ENCODE measurements at regions of chr2 and their contacts with region 1.

Region 1: DNA sequence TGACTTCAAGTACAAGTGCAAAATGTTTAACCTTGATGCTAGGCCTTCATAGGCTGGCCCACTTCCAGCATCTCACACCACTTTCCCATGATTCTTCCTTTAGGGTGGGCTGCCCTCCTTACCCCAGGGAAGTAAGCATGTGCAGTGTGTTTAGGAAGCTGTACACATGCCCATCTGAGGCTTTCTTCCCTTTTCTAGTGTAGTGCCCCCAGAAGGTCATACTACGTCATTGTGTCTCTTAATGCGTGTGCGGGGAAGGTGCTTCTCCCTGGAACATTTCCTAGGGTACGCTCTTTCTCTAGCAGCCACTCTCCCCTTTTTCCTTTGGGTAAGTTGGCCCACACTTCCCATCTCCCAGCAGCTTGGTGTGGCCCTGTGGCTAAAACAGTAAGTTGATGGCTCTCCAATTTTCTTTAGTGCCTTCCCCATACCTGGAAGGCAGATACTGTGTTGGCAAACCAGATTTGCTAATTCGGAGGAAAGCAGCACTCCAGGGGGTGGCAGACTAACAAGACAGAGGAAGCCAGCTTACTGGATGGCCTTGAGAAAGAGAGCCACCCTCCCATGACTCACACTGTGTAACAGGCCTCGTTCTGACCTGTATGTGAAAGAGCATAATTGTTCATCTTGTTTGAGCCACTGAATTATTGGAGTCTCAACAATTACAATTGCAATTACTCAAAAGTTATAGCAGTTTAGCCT is 1.1 kb upstream of the SULT6B1 start:
- DNase-seq: peak; percentile 24
- H3K4me3 Mint-ChIP-seq: no peak overlapping the region
- H3K27ac Mint-ChIP-seq: no peak overlapping the region
- H3K4me1 Mint-ChIP-seq: peaks cover 2% of the 10 kb centered on the region
- H3K27me3 Mint-ChIP-seq: peaks cover 6% of the 10 kb centered on the region

Region 2: GRCh38 chr2:36973320-36973719 is 216.3 kb before region 1 on chr2:
- CTCF ChIA-PET with region 1: no interaction called
- POLR2A ChIA-PET with region 1: no interaction called
- intact Hi-C with region 1: no loop called
- DNase-seq: no peak
- H3K4me3 Mint-ChIP-seq: no peak overlapping the region
- H3K27ac Mint-ChIP-seq: no peak overlapping the region
- H3K4me1 Mint-ChIP-seq: peaks cover 1% of the 10 kb centered on the region
- H3K27me3 Mint-ChIP-seq: no peaks in the 10 kb centered on the region

Region 3: DNA sequence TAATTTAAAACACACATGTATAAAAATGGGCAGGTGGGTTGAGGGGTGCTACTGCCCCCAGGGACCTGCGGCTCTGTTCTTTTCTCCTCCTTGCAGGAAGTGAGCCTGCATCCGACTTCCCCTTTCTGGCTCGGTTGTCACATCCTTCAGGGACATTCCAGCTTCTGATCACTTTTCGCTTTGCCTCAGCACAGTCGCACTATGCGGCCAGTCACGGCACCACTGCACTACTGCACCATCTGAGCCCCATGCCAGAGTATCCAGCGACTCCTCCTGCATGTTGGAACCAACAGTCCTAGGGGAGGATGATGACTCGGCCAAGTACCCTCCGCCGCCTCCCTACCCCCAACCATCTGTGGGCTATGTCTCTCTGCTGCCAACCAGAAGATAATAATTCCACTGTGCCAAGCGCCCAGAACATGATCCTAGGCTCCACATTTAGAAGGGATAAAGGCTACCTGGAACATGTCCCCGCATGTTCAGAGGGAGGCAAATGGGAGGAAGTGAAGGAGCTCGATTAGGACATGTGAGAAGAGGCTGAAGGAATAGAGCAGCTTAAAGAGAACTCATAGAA is 464.3 kb after region 1 on chr2:
- CTCF ChIA-PET with region 1: no interaction called
- POLR2A ChIA-PET with region 1: no interaction called
- intact Hi-C with region 1: loop called (anchors 5 kb)
- DNase-seq: peak; percentile 63
- H3K4me3 Mint-ChIP-seq: peak overlapping the region; percentile 28
- H3K27ac Mint-ChIP-seq: peak overlapping the region; percentile 83
- H3K4me1 Mint-ChIP-seq: peaks cover 94% of the 10 kb centered on the region
- H3K27me3 Mint-ChIP-seq: no peaks in the 10 kb centered on the region